Right ventricle myocardium superior (tissue), 1 donor: ENCODE measurements at regions of chr4 and their contacts with region 1.

Region 1: GRCh38 chr4:85370430-85371032 is 104.4 kb upstream of the ARHGAP24 start:
- DNase-seq: no peak
- ATAC-seq: peak; percentile 73

Region 2: DNA sequence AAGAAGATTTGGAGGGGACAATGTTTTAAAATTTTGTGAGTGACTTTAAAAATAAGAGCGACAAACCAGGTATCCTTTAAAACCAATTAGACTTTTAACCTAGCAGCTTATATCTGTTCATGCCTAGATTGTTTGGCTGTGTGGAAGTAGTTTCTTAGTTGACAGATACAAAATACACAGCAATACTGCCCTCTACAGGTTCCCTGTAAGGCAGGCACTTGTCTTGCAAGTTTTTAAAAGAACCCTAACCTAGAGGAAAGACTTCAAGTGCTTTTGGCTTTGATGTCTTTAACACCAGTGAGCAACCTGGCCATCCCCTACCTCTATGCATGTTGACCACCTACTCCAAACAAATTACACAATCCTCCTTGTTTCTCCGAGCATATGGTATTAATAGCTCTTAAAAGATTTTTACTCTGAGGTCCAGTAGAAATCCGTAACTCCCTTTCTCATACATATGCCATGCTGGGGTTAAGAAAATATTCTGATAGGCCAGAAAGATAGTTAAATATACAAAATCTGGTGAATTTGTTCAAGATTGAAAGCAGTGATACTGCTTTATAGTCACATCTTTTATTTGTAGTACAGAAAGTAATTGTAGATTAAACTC is 377.5 kb after region 1 on chr4:
- intact Hi-C with region 1: loop called (anchors 10 kb)
- DNase-seq: no peak
- ATAC-seq: peak; percentile 89